Naive thymus-derived CD4-positive, alpha-beta T cell (primary cell): ENCODE measurements at regions of chr7 and their contacts with region 1.

Region 1: GRCh38 chr7:150737265-150738055 is at the start of gene GIMAP5:
- DNase-seq: peak in 6 of 9 donors; percentile 47 to 57 (median 56)
- ATAC-seq: peak; percentile 79
- H3K4me3 ChIP-seq: peak within 1 kb of the TSS; percentile 84
- H3K4me3 Mint-ChIP-seq: peak within 1 kb of the TSS; percentile 90 to 100 (median 98)
- H3K27ac ChIP-seq: peak within 1 kb of the TSS; percentile 82
- H3K27ac Mint-ChIP-seq: peak within 1 kb of the TSS; percentile 87 to 99 (median 96)
- H3K4me1 ChIP-seq: peaks cover 49 to 56% of the 10 kb centered on the region in 2 donors
- H3K4me1 Mint-ChIP-seq: peaks cover 56 to 73% (median 65%) of the 10 kb centered on the region in 7 donors
- H3K27me3 ChIP-seq: no peaks in the 10 kb centered on the region
- H3K27me3 Mint-ChIP-seq: no peaks in the 10 kb centered on the region
- total RNA-seq, gene GIMAP5: 58.1 to 422 (median 214) TPM

Region 2: DNA sequence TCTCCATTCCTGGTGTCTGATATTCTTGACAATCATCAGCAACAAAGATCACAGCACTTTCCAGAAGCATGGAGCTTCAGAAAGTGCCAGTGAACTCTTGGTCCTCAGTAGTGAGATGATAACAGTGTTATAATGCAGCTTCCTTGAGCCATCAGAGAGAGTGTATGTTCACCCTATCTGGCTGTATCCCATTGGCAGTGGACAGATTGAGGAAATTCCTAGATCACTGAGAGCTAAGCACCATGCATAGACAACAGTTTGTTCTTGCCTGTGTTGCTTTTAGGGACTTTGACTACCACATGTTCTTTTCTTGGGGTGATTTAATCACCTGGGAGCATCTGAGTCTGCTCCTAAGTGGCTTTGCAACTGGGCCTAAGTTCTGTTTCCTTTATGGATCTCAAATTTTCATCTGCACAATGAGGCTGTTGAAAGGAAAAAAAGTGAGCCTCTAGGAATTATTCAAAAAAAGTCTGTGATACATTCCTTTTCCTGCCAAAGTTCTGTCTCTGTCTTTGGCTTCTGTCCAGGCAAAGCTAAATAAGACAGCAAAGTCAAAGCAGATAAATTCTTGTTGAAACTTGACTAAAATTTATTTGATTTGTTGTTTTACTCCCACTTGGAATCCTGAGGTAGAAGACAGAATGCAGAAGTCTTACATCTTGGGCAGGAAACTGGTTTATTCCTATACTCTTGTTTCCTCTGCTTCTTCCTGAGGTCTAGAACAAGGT is 1556.6 kb before region 1 on chr7:
- CTCF ChIA-PET with region 1: no interaction called
- POLR2A ChIA-PET with region 1: no interaction called
- intact Hi-C with region 1: no loop called
- DNase-seq: no peak
- ATAC-seq: no peak
- H3K4me3 ChIP-seq: no peak overlapping the region
- H3K4me3 Mint-ChIP-seq: no peak overlapping the region
- H3K27ac ChIP-seq: no peak overlapping the region
- H3K27ac Mint-ChIP-seq: peak overlapping the region in 4 of 9 donors; percentile 11 to 74 (median 54)
- H3K4me1 ChIP-seq: no peaks in the 10 kb centered on the region
- H3K4me1 Mint-ChIP-seq: peaks cover 0 to 7% (median 0%) of the 10 kb centered on the region in 7 donors
- H3K27me3 ChIP-seq: no peaks in the 10 kb centered on the region
- H3K27me3 Mint-ChIP-seq: no peaks in the 10 kb centered on the region

Region 3: DNA sequence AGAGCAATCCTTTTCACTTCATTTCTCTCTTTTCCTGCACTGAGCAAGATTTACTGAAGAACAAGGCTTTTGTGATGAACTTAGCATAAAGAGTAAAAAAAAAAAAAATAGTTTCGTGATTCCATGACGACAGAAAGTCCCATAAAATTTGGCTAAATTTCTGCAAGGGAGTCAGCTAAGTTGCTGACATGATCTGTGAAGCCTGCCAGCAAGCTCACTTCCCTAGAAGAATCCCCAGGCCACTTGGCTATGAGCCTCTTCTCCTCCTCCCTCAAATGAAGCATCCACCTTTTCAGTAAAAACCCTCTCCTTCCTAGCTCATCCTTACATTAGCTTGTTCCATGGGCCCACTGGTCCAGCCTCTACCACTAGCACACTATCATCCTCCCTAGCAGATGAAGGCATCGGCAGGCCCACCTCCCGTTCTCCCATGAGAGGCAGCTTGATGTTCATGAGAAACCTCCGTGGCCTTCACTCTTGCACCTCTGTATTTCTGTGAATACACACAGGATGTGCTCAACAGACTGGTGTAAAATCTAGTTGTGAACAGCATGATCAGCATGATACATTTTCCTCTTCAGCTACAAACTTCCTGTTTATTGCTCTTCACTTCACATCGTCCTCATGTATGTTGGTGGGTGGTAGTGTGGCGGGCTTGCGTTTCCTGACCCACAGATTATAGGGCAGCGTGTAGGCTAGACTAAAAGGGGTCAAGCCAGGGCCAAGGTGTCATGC is 256.1 kb before region 1 on chr7:
- CTCF ChIA-PET with region 1: no interaction called
- POLR2A ChIA-PET with region 1: interaction called, 17 read pairs
- intact Hi-C with region 1: no loop called
- DNase-seq: peak in 8 of 9 donors; percentile 46 to 81 (median 71)
- ATAC-seq: peak; percentile 68
- H3K4me3 ChIP-seq: peak overlapping the region; percentile 12
- H3K4me3 Mint-ChIP-seq: peak overlapping the region; percentile 79 to 97 (median 90)
- H3K27ac ChIP-seq: peak overlapping the region; percentile 95
- H3K27ac Mint-ChIP-seq: peak overlapping the region; percentile 97 to 100 (median 100)
- H3K4me1 ChIP-seq: peaks cover 84 to 89% of the 10 kb centered on the region in 2 donors
- H3K4me1 Mint-ChIP-seq: peaks cover 58 to 99% (median 92%) of the 10 kb centered on the region in 7 donors
- H3K27me3 ChIP-seq: no peaks in the 10 kb centered on the region
- H3K27me3 Mint-ChIP-seq: no peaks in the 10 kb centered on the region

Region 4: DNA sequence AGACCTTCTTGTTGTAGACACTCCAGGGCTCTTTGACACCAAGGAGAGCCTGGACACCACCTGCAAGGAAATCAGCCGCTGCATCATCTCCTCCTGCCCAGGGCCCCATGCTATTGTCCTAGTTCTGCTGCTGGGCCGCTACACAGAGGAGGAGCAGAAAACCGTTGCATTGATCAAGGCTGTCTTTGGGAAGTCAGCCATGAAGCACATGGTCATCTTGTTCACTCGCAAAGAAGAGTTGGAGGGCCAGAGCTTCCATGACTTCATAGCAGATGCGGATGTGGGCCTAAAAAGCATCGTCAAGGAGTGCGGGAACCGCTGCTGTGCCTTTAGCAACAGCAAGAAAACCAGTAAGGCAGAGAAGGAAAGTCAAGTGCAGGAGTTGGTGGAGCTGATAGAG is 217.3 kb before region 1 on chr7:
- CTCF ChIA-PET with region 1: interaction called, 3 read pairs
- POLR2A ChIA-PET with region 1: interaction called, 212 read pairs
- intact Hi-C with region 1: loop called (anchors 1 to 2 kb)
- DNase-seq: peak in 4 of 9 donors; percentile 17 to 51 (median 42)
- ATAC-seq: peak; percentile 29
- H3K4me3 ChIP-seq: peak overlapping the region; percentile 59
- H3K4me3 Mint-ChIP-seq: peak overlapping the region; percentile 93 to 100 (median 99)
- H3K27ac ChIP-seq: peak overlapping the region; percentile 84
- H3K27ac Mint-ChIP-seq: peak overlapping the region; percentile 80 to 98 (median 94)
- H3K4me1 ChIP-seq: peaks cover 8 to 9% of the 10 kb centered on the region in 2 donors
- H3K4me1 Mint-ChIP-seq: peaks cover 22 to 42% (median 36%) of the 10 kb centered on the region in 7 donors
- H3K27me3 ChIP-seq: no peaks in the 10 kb centered on the region
- H3K27me3 Mint-ChIP-seq: no peaks in the 10 kb centered on the region

Region 5: GRCh38 chr7:150642926-150643325 is 94.5 kb before region 1 on chr7:
- CTCF ChIA-PET with region 1: no interaction called
- POLR2A ChIA-PET with region 1: interaction called, 13 read pairs
- intact Hi-C with region 1: no loop called
- DNase-seq: no peak
- ATAC-seq: no peak
- H3K4me3 ChIP-seq: no peak overlapping the region
- H3K4me3 Mint-ChIP-seq: peak overlapping the region in 1 of 10 donors; percentile 7
- H3K27ac ChIP-seq: no peak overlapping the region
- H3K27ac Mint-ChIP-seq: peak overlapping the region in 4 of 9 donors; percentile 23 to 88 (median 54)
- H3K4me1 ChIP-seq: peaks cover 7 to 47% of the 10 kb centered on the region in 2 donors
- H3K4me1 Mint-ChIP-seq: peaks cover 19 to 88% (median 74%) of the 10 kb centered on the region in 7 donors
- H3K27me3 ChIP-seq: no peaks in the 10 kb centered on the region
- H3K27me3 Mint-ChIP-seq: no peaks in the 10 kb centered on the region

Region 6: DNA sequence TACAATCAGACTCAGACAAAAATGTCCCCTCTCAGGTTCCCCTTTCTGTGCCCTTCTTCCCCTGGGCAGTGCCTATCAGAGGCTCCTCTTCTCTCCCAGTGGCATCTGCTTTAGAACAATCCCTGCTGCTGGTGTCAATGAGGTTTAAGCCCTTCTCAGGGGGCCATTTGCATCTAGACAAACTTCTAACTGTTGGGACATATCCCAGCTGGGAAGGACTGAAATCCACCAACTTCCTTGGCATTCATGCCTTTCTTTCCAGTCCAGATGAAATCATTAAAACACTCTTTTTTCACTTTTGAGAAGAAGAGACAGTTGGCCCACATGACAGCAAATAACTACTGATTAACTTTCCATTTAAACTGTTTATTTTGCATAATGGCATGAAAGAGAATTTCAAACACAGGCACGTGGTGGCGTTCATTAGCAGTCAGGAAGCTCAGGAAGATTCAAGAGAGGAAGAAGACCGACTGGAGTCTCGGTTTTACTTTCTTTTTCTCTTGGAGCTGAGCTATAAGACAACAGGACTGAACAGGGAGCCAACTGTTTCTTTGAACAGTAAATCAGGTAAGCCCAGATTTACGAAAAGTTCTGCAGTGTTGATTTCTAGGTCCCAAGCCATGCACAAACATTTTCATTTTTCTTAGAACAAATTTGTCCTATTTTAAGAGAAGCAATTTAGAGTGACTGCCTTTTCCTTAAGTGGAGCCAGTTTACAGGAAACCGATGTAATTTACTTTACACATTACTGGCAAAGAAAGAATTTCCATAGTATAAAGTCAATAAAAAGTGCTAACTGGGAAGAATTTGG is 52.0 kb before region 1 on chr7 and contains the start of gene GIMAP2:
- CTCF ChIA-PET with region 1: interaction called, 4 read pairs
- POLR2A ChIA-PET with region 1: interaction called, 151 read pairs
- intact Hi-C with region 1: loop called (anchors 1 to 2 kb)
- DNase-seq: peak in 7 of 9 donors; percentile 40 to 73 (median 65)
- ATAC-seq: peak; percentile 90
- H3K4me3 ChIP-seq: peak within 1 kb of the TSS; percentile 97
- H3K4me3 Mint-ChIP-seq: peak within 1 kb of the TSS; percentile 88 to 100 (median 98)
- H3K27ac ChIP-seq: peak within 1 kb of the TSS; percentile 78
- H3K27ac Mint-ChIP-seq: peak within 1 kb of the TSS; percentile 91 to 100 (median 97)
- H3K4me1 ChIP-seq: peaks cover 49 to 53% of the 10 kb centered on the region in 2 donors
- H3K4me1 Mint-ChIP-seq: peaks cover 50 to 87% (median 81%) of the 10 kb centered on the region in 7 donors
- H3K27me3 ChIP-seq: no peaks in the 10 kb centered on the region
- H3K27me3 Mint-ChIP-seq: no peaks in the 10 kb centered on the region
- total RNA-seq, gene GIMAP2: 79.4 to 286 (median 122) TPM

Region 7: GRCh38 chr7:150716368-150716767 is 21.1 kb before region 1 on chr7 and contains the start of gene GIMAP1:
- CTCF ChIA-PET with region 1: interaction called, 37 read pairs
- POLR2A ChIA-PET with region 1: interaction called, 467 read pairs
- intact Hi-C with region 1: loop called (anchors 1 kb)
- DNase-seq: peak in 8 of 9 donors; percentile 14 to 85 (median 81)
- ATAC-seq: peak; percentile 90
- H3K4me3 ChIP-seq: peak within 1 kb of the TSS; percentile 88
- H3K4me3 Mint-ChIP-seq: peak within 1 kb of the TSS; percentile 89 to 100 (median 98)
- H3K27ac ChIP-seq: peak within 1 kb of the TSS; percentile 86
- H3K27ac Mint-ChIP-seq: peak within 1 kb of the TSS; percentile 76 to 98 (median 95)
- H3K4me1 ChIP-seq: peaks cover 39 to 46% of the 10 kb centered on the region in 2 donors
- H3K4me1 Mint-ChIP-seq: peaks cover 38 to 77% (median 61%) of the 10 kb centered on the region in 7 donors
- H3K27me3 ChIP-seq: no peaks in the 10 kb centered on the region
- H3K27me3 Mint-ChIP-seq: no peaks in the 10 kb centered on the region
- total RNA-seq, gene GIMAP1: 23.3 to 124 (median 32.6) TPM

Region 8: GRCh38 chr7:150962553-150963399 is 225.3 kb after region 1 on chr7:
- CTCF ChIA-PET with region 1: no interaction called
- POLR2A ChIA-PET with region 1: no interaction called
- intact Hi-C with region 1: no loop called
- DNase-seq: peak; percentile 31 to 69 (median 53)
- ATAC-seq: peak; percentile 82
- H3K4me3 ChIP-seq: no peak overlapping the region
- H3K4me3 Mint-ChIP-seq: peak overlapping the region in 1 of 10 donors; percentile 51
- H3K27ac ChIP-seq: no peak overlapping the region
- H3K27ac Mint-ChIP-seq: no peak overlapping the region
- H3K4me1 ChIP-seq: no peaks in the 10 kb centered on the region
- H3K4me1 Mint-ChIP-seq: peaks cover 9 to 41% (median 24%) of the 10 kb centered on the region in 7 donors
- H3K27me3 ChIP-seq: no peaks in the 10 kb centered on the region
- H3K27me3 Mint-ChIP-seq: peaks cover 15 to 36% (median 20%) of the 10 kb centered on the region in 5 donors